Activated naive CD4-positive, alpha-beta T cell treated with anti-CD3 and anti-CD28 coated beads for 36 hours (primary cell): ENCODE measurements at regions of chr4 and their contacts with region 1.

Region 1: GRCh38 chr4:73230865-73231517 is 27.6 kb downstream of the ANKRD17 start:
- DNase-seq: no peak
- H3K4me3 Mint-ChIP-seq: no peak overlapping the region
- H3K27ac Mint-ChIP-seq: no peak overlapping the region
- H3K4me1 Mint-ChIP-seq: peaks cover 14% of the 10 kb centered on the region
- H3K27me3 Mint-ChIP-seq: no peaks in the 10 kb centered on the region

Region 2: GRCh38 chr4:73187325-73187724 is 43.7 kb before region 1 on chr4:
- CTCF ChIA-PET with region 1: no interaction called
- intact Hi-C with region 1: no loop called
- DNase-seq: no peak
- H3K4me3 Mint-ChIP-seq: no peak overlapping the region
- H3K27ac Mint-ChIP-seq: no peak overlapping the region
- H3K4me1 Mint-ChIP-seq: peaks cover 26% of the 10 kb centered on the region
- H3K27me3 Mint-ChIP-seq: no peaks in the 10 kb centered on the region

Region 3: GRCh38 chr4:73245955-73246354 is 15.0 kb after region 1 on chr4:
- CTCF ChIA-PET with region 1: interaction called, 3 read pairs
- intact Hi-C with region 1: loop called (anchors 2 kb)
- DNase-seq: no peak
- H3K4me3 Mint-ChIP-seq: no peak overlapping the region
- H3K27ac Mint-ChIP-seq: peak overlapping the region; percentile 74
- H3K4me1 Mint-ChIP-seq: peaks cover 64% of the 10 kb centered on the region
- H3K27me3 Mint-ChIP-seq: no peaks in the 10 kb centered on the region